Mammary epithelial cell (primary cell): ENCODE measurements at regions of chr5 and their contacts with region 1.

Region 1: GRCh38 chr5:170100066-170100943 is 5.4 kb upstream of the FOXI1 start:
- DNase-seq: peak; percentile 38
- H3K4me3 ChIP-seq: no peak overlapping the region
- H3K27ac ChIP-seq: no peak overlapping the region
- H3K4me1 ChIP-seq: no peaks in the 10 kb centered on the region
- H3K27me3 ChIP-seq: no peaks in the 10 kb centered on the region
- CTCF ChIP-seq: peak; percentile 52 to 69

Region 2: GRCh38 chr5:170183816-170184687 is 83.7 kb after region 1 on chr5:
- CTCF ChIA-PET with region 1: no interaction called
- dilution Hi-C with region 1: loop called (anchors 5 kb)
- in situ Hi-C with region 1: loop called (anchors 5 kb)
- intact Hi-C with region 1: loop called (anchors 1 kb)
- DNase-seq: peak; percentile 35
- H3K4me3 ChIP-seq: no peak overlapping the region
- H3K27ac ChIP-seq: no peak overlapping the region
- H3K4me1 ChIP-seq: no peaks in the 10 kb centered on the region
- H3K27me3 ChIP-seq: no peaks in the 10 kb centered on the region
- CTCF ChIP-seq: peak; percentile 85 to 91

Region 3: DNA sequence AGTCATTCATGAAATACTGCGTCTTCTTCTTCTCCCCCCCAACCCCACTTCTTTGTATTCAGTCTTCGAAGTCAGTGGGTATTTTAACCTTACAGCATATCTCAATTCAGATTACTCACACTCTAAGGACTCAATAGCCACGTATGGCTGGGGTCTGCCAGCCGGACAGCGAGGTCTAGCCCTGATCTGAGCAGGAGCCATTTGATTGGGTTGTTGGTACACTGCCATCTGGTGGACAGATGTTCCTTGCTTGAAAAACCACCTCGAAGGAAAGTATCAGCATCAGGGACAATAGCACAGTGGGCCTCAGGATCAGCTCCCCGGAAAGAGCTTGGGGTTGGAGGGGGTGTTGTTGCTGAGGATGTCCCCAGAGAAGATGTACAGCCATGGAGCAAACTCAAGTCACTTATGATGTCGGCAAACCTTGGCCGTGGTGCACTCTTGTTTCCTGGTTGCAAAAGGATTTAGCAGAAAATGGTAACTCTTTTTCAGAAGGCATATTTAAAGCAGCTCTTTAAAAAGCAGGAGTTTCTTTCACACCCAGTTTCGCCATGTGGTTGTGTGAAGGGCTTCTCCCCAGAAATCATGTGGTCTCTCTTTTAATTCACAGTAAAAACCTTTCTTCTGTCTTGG is 320.6 kb after region 1 on chr5:
- CTCF ChIA-PET with region 1: no interaction called
- dilution Hi-C with region 1: no loop called
- in situ Hi-C with region 1: no loop called
- intact Hi-C with region 1: loop called (anchors 5 kb)
- DNase-seq: peak; percentile 34
- H3K4me3 ChIP-seq: no peak overlapping the region
- H3K27ac ChIP-seq: no peak overlapping the region
- H3K4me1 ChIP-seq: no peaks in the 10 kb centered on the region
- H3K27me3 ChIP-seq: no peaks in the 10 kb centered on the region
- CTCF ChIP-seq: peak; percentile 64 to 78

Region 4: DNA sequence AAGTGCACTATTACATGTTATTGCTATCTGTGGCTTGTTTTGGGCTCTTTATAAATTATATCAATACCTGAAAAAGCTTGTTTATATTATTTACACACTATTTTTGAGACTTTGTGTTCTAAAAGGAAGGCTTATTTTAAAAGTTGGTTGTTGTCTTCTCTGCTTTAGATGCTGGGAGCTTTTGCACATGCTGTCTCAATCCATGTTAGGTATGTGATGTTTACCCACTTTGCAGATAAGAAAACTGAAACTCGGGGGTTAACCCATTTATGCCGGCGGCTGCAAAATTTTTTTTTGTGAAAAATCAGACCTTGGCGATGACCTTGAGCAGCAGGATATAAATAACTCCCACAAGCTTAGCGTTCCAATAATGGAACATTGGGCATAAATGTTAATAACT is 974.4 kb after region 1 on chr5:
- CTCF ChIA-PET with region 1: no interaction called
- dilution Hi-C with region 1: no loop called
- in situ Hi-C with region 1: no loop called
- intact Hi-C with region 1: no loop called
- DNase-seq: no peak
- H3K4me3 ChIP-seq: no peak overlapping the region
- H3K27ac ChIP-seq: no peak overlapping the region
- H3K4me1 ChIP-seq: no peaks in the 10 kb centered on the region
- H3K27me3 ChIP-seq: no peaks in the 10 kb centered on the region
- CTCF ChIP-seq: no peak

Region 5: GRCh38 chr5:171152382-171152781 is 1052.1 kb after region 1 on chr5:
- CTCF ChIA-PET with region 1: no interaction called
- dilution Hi-C with region 1: no loop called
- in situ Hi-C with region 1: no loop called
- intact Hi-C with region 1: no loop called
- DNase-seq: peak; percentile 19
- H3K4me3 ChIP-seq: no peak overlapping the region
- H3K27ac ChIP-seq: no peak overlapping the region
- H3K4me1 ChIP-seq: no peaks in the 10 kb centered on the region
- H3K27me3 ChIP-seq: no peaks in the 10 kb centered on the region
- CTCF ChIP-seq: peak; percentile 14 to 47